ENCODE measurements at regions of chr11 and their contacts with region 1.

Region 1: GRCh38 chr11:33857933-33858371 is 33.9 kb downstream of the LMO2 start:
- DNase-seq: peak; percentile 82 to 92
- ATAC-seq: peak; percentile 89
- H3K4me3 ChIP-seq: no peak overlapping the region
- H3K27ac ChIP-seq: no peak overlapping the region
- H3K4me1 ChIP-seq: no peaks in the 10 kb centered on the region
- H3K27me3 ChIP-seq: no peaks in the 10 kb centered on the region

Region 2: DNA sequence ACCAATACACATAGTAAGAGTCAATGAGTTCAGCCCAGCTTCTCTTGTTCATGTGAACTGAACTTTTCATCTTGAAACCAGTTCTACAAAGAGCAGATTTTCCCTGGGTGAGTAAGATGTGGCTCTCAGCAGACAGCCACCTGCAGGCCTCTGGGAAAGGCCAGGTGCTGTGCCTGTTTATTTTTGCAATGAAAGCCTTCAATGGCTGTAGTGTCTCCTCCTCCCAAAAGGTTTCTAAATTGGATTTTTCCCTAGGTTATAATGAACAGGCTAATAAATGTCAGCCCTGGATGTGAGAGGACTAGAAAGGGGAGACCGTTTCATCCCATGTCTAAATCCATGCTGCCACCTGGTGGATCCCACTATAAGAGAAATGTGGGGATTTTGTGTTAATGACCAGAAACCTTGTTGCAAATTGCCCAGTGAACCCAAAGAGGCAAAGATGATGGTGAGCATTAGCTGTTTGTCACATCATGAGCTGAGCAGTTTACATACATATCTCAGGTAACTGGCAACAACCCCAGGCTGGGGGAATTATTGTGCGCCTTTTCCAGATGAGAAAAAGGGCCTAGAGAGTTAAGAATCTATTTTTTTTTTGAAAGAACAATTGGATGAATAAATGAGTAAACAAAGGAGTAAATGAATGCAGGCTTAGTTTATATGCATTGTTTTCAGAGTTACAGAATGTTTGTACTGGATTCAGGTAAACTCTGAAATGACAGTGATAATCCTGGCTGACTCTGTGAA is 170.0 kb before region 1 on chr11:
- intact Hi-C with region 1: no loop called
- DNase-seq: no peak
- ATAC-seq: no peak
- H3K4me3 ChIP-seq: no peak overlapping the region
- H3K27ac ChIP-seq: no peak overlapping the region
- H3K4me1 ChIP-seq: peaks cover 0 to 3% of the 10 kb centered on the region in 2 donors
- H3K27me3 ChIP-seq: no peaks in the 10 kb centered on the region

Region 3: DNA sequence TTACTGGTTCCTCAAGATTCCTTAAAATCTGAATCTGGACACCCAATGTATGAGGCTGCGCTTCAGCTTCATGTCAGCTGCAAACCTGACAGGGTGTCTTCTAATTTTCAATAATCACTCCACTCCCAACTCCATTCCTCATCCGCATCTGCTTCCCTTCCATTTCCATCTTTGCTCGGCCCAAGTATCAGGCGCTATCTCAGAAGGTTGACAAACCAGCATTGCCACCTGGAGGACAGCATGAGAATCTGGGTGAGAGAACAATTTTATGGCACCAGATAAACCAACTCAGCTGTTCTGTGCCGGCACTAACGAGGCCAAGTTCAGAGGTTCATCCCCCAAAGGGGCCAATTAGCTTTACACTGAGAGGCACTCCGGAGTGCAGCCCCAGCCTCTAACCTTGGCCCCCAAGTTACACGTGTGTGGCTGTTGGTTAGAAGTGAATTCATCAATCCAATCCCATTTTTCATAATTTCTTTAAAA is 113.1 kb after region 1 on chr11:
- intact Hi-C with region 1: loop called in 1 of 2 experiments (anchors 1 kb)
- DNase-seq: peak in 1 of 2 donors; percentile 65
- ATAC-seq: peak; percentile 89
- H3K4me3 ChIP-seq: no peak overlapping the region
- H3K27ac ChIP-seq: no peak overlapping the region
- H3K4me1 ChIP-seq: no peaks in the 10 kb centered on the region
- H3K27me3 ChIP-seq: no peaks in the 10 kb centered on the region

Region 4: DNA sequence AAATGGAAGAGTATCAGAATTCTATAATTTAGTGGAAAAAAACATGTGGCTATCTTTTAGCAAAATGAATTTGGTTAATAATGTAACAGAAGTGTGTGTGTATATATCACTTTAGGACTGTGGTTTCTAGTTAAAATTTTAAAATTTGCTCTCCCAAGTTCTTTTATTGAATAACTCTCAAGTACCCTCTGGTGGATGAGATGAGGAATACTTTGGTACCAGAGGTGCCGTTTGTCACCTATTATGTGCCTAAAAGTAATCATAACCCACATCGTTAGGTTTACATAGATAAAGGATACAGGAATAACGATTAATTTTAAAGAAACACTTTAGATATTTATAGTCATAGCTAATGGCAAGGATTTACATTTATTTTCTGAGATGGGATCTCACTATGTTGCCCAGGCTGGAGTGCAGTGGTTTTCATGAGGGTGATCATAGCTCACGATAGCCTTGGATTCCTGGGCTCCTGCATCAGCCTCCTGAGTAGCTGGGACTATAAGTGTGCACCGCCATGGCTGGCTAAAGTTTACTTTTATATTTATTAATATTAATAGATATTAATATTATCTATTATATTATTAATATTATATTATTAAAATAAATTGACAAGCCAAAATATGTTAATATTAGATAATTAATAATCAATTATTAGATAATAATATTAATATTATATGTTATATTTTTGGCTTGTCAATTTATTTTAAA is 126.9 kb after region 1 on chr11:
- intact Hi-C with region 1: loop called in 1 of 2 experiments (anchors 5 kb)
- DNase-seq: no peak
- ATAC-seq: no peak
- H3K4me3 ChIP-seq: no peak overlapping the region
- H3K27ac ChIP-seq: no peak overlapping the region
- H3K4me1 ChIP-seq: no peaks in the 10 kb centered on the region
- H3K27me3 ChIP-seq: no peaks in the 10 kb centered on the region

Region 5: GRCh38 chr11:34318111-34319037 is 460.4 kb after region 1 on chr11:
- intact Hi-C with region 1: no loop called
- DNase-seq: no peak
- ATAC-seq: peak; percentile 37
- H3K4me3 ChIP-seq: no peak overlapping the region
- H3K27ac ChIP-seq: peak overlapping the region in 1 of 2 donors; percentile 59
- H3K4me1 ChIP-seq: peaks cover 2% of the 10 kb centered on the region in 2 donors
- H3K27me3 ChIP-seq: no peaks in the 10 kb centered on the region

Region 6: GRCh38 chr11:34366522-34366921 is 508.6 kb after region 1 on chr11:
- intact Hi-C with region 1: loop called in 1 of 2 experiments (anchors 10 kb)
- DNase-seq: no peak
- ATAC-seq: no peak
- H3K4me3 ChIP-seq: no peak overlapping the region
- H3K27ac ChIP-seq: no peak overlapping the region
- H3K4me1 ChIP-seq: no peaks in the 10 kb centered on the region
- H3K27me3 ChIP-seq: no peaks in the 10 kb centered on the region

Measured in aorta (tissue), 5 donors.